ENCODE measurements at regions of chr14 and their contacts with region 1.

Region 1: DNA sequence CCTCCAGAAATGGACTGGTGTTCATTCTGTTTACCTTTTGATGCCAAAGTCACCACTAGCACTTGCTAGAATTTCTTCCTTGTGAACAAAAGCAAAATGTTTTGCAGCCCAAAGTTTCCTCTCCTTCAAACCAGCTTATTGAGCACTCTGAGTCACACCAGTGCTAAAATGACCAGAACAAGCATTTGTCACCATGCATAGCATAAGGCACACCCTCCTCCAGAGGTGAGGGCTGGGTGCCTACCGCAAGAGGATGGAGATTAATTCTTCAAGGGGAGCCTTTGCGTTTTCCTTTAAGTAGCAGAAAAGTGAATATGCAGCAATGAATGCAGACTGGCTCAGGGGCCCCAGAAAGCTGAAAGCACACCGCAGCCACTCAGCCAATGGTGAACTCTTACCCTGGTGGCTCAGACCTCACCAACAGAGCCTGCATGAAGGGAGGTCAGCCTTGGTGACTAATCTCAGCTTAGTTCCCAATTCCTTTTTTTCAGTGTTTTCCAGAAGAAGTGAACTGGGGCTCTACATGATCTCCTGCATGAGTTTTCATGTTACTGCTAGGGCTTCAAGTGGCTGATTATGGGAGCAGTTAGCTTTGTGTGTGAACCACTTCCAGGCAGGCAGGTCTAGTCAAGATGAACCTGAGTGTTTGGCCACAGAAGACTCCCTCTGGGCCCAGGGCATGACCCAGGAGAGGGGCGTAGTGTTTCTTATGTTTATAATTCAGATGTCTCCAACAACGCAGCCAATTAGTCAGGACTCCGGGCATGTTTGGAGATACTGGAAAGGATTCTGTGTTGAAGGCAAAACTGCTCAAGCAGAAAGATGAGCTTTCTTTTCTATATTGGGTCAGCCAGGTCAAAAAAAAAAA is 96.3 kb downstream of the PAX9 start:
- DNase-seq: no peak
- ATAC-seq: no peak
- H3K4me3 ChIP-seq: no peak overlapping the region
- H3K27ac ChIP-seq: no peak overlapping the region
- H3K4me1 ChIP-seq: no peaks in the 10 kb centered on the region
- CTCF ChIP-seq: no peak
- EP300 ChIP-seq: no peak
- POLR2A ChIP-seq: no peak
- RAD21 ChIP-seq: no peak

Region 2: GRCh38 chr14:36747411-36748184 is 10.4 kb before region 1 on chr14:
- CTCF ChIA-PET with region 1: interaction called, 10 read pairs
- POLR2A ChIA-PET with region 1: no interaction called
- DNase-seq: peak; percentile 17 to 32
- ATAC-seq: peak in 1 of 2 experiments; percentile 75; a peak in 4 of 6 replicates
- H3K4me3 ChIP-seq: no peak overlapping the region
- H3K27ac ChIP-seq: no peak overlapping the region
- H3K4me1 ChIP-seq: no peaks in the 10 kb centered on the region
- CTCF ChIP-seq: peak; percentile 57
- EP300 ChIP-seq: no peak
- POLR2A ChIP-seq: no peak
- RAD21 ChIP-seq: peak in 1 of 2 experiments; percentile 26; a peak in 3 of 5 replicates

Region 3: GRCh38 chr14:36928432-36928831 is 170.5 kb after region 1 on chr14:
- CTCF ChIA-PET with region 1: no interaction called
- POLR2A ChIA-PET with region 1: no interaction called
- DNase-seq: no peak
- ATAC-seq: no peak
- H3K4me3 ChIP-seq: no peak overlapping the region
- H3K27ac ChIP-seq: no peak overlapping the region
- H3K4me1 ChIP-seq: no peaks in the 10 kb centered on the region
- CTCF ChIP-seq: no peak
- EP300 ChIP-seq: no peak
- POLR2A ChIP-seq: no peak
- RAD21 ChIP-seq: no peak

Measured in A549 (cell line).